WTC11 (cell line): ENCODE measurements at regions of chr2 and their contacts with region 1.

Region 1: GRCh38 chr2:85888684-85889626 is at the start of gene ST3GAL5:
- DNase-seq: peak; percentile 89
- ATAC-seq: peak; percentile 82
- H3K4me3 Mint-ChIP-seq: peak within 1 kb of the TSS; percentile 91
- H3K27ac Mint-ChIP-seq: no peak within 1 kb of the TSS
- H3K4me1 Mint-ChIP-seq: peaks cover 29% of the 10 kb centered on the region
- H3K27me3 Mint-ChIP-seq: peaks cover 29% of the 10 kb centered on the region
- CTCF ChIP-seq: no peak
- total RNA-seq, gene ST3GAL5: 5.9 to 6.8 TPM (median 6.2 TPM) in 3 replicates

Region 2: GRCh38 chr2:85741833-85742455 is 147.0 kb before region 1 on chr2:
- CTCF ChIA-PET with region 1: no interaction called
- POLR2A ChIA-PET with region 1: no interaction called
- DNase-seq: no peak
- ATAC-seq: no peak
- H3K4me3 Mint-ChIP-seq: no peak overlapping the region
- H3K27ac Mint-ChIP-seq: no peak overlapping the region
- H3K4me1 Mint-ChIP-seq: peaks cover 7% of the 10 kb centered on the region
- H3K27me3 Mint-ChIP-seq: peaks cover 10% of the 10 kb centered on the region
- CTCF ChIP-seq: no peak

Region 3: GRCh38 chr2:85852937-85853498 is 35.9 kb before region 1 on chr2:
- CTCF ChIA-PET with region 1: interaction called, 10 read pairs
- POLR2A ChIA-PET with region 1: no interaction called
- DNase-seq: no peak
- ATAC-seq: no peak
- H3K4me3 Mint-ChIP-seq: no peak overlapping the region
- H3K27ac Mint-ChIP-seq: peak overlapping the region; percentile 19; the same call in 1 of the 2 replicates
- H3K4me1 Mint-ChIP-seq: no peaks in the 10 kb centered on the region
- H3K27me3 Mint-ChIP-seq: no peaks in the 10 kb centered on the region
- CTCF ChIP-seq: no peak

Region 4: GRCh38 chr2:85873679-85874078 is 15.3 kb before region 1 on chr2:
- CTCF ChIA-PET with region 1: interaction called, 11 read pairs
- POLR2A ChIA-PET with region 1: no interaction called
- DNase-seq: peak; percentile 38
- ATAC-seq: peak; percentile 47; the same call in 1 of the 2 replicates
- H3K4me3 Mint-ChIP-seq: no peak overlapping the region
- H3K27ac Mint-ChIP-seq: no peak overlapping the region
- H3K4me1 Mint-ChIP-seq: peaks cover 26% of the 10 kb centered on the region
- H3K27me3 Mint-ChIP-seq: no peaks in the 10 kb centered on the region; the same call in 1 of the 2 replicates
- CTCF ChIP-seq: no peak

Region 5: GRCh38 chr2:85907671-85908157 is 18.8 kb after region 1 on chr2:
- CTCF ChIA-PET with region 1: interaction called, 10 read pairs
- POLR2A ChIA-PET with region 1: interaction called, 3 read pairs
- DNase-seq: no peak
- ATAC-seq: no peak
- H3K4me3 Mint-ChIP-seq: no peak overlapping the region
- H3K27ac Mint-ChIP-seq: no peak overlapping the region
- H3K4me1 Mint-ChIP-seq: no peaks in the 10 kb centered on the region
- H3K27me3 Mint-ChIP-seq: no peaks in the 10 kb centered on the region
- CTCF ChIP-seq: no peak

Region 6: DNA sequence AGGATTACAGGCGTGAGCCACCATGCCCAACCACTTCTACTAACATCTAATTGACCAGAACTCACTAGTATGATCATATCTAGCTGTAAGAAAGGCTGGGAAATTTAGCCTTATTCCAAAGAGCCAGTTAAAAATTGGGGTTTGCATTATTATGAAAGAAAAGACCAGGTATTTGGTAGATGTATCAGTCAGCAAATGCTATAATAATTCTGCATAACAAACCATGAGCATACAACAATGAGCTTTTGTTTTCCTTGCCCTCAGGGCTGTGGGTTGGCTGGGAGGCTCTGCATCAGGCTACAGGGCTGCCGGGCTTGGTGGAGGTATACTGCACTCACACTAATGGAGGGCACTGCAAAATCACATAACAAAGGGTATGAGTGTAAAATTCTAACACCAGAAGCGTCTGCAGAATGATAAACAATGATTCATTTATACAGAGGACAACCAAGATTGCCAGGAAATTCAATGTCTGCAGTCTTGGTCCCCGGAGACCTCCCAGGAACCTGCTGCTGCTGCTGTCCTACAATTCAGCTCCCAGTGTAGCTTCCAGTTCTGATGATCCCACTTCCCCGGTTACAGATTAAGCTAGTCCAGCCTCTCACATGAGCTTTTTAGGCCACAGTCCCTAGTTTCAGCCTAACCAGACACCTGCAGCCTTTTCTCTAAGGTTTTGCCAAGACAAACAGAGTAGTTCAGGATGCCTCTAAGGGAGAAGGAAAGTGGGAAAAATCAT is 32.0 kb after region 1 on chr2:
- CTCF ChIA-PET with region 1: interaction called, 12 read pairs
- POLR2A ChIA-PET with region 1: no interaction called
- DNase-seq: no peak
- ATAC-seq: no peak
- H3K4me3 Mint-ChIP-seq: no peak overlapping the region
- H3K27ac Mint-ChIP-seq: no peak overlapping the region
- H3K4me1 Mint-ChIP-seq: peaks cover 11% of the 10 kb centered on the region; the same call in 1 of the 2 replicates
- H3K27me3 Mint-ChIP-seq: no peaks in the 10 kb centered on the region; the same call in 1 of the 2 replicates
- CTCF ChIP-seq: no peak

Region 7: GRCh38 chr2:86020984-86021383 is 132.0 kb after region 1 on chr2:
- CTCF ChIA-PET with region 1: interaction called, 12 read pairs
- POLR2A ChIA-PET with region 1: no interaction called
- DNase-seq: no peak
- ATAC-seq: no peak
- H3K4me3 Mint-ChIP-seq: no peak overlapping the region
- H3K27ac Mint-ChIP-seq: peak overlapping the region; percentile 14; the same call in 1 of the 2 replicates
- H3K4me1 Mint-ChIP-seq: no peaks in the 10 kb centered on the region
- H3K27me3 Mint-ChIP-seq: no peaks in the 10 kb centered on the region; the same call in 1 of the 2 replicates
- CTCF ChIP-seq: no peak